PC-9 (cell line): ENCODE measurements at regions of chr18 and their contacts with region 1.

Region 1: GRCh38 chr18:49055754-49056172 is 105.0 kb upstream of the SMAD7 start:
- DNase-seq: peak; percentile 14 to 51
- H3K4me3 ChIP-seq: no peak overlapping the region; the same call in 1 of the 2 replicates
- H3K27ac ChIP-seq: peak overlapping the region; percentile 61
- H3K4me1 ChIP-seq: peaks cover 41% of the 10 kb centered on the region
- H3K27me3 ChIP-seq: no peaks in the 10 kb centered on the region
- CTCF ChIP-seq: no peak

Region 2: GRCh38 chr18:49041435-49042245 is 14.1 kb before region 1 on chr18:
- CTCF ChIA-PET with region 1: no interaction called
- POLR2A ChIA-PET with region 1: interaction called, 19 read pairs
- intact Hi-C with region 1: no loop called
- DNase-seq: peak in 1 of 2 experiments; percentile 22
- H3K4me3 ChIP-seq: no peak overlapping the region
- H3K27ac ChIP-seq: no peak overlapping the region
- H3K4me1 ChIP-seq: no peaks in the 10 kb centered on the region
- H3K27me3 ChIP-seq: no peaks in the 10 kb centered on the region
- CTCF ChIP-seq: peak; percentile 72